ENCODE measurements at regions of chr20 and their contacts with region 1.

Region 1: DNA sequence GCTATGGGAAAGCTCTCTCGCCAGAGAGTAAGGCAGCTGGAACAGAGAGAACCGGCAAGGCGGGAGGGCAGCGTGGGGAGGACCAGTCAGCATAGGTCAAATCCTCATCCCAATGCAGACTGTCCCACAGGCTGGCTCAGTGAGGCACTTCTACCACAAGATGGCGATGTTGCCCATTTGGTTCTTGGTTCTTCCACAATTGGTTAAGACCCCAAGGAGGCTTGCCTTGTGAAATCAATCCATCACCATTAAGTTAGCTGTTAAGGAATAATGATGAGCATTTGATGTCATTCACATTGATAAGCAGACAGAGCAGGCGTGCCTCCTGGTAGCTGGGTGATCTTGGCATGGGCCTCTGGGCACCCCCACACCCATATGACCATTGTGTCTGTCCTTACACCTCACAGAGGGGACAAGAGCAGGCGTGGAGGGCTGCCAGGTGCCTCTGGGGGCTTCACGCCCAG is 2.4 kb downstream of the CSTL1 start:
- DNase-seq: peak; percentile 77
- H3K4me3 ChIP-seq: no peak overlapping the region
- H3K27ac ChIP-seq: no peak overlapping the region
- H3K4me1 ChIP-seq: no peaks in the 10 kb centered on the region
- H3K27me3 ChIP-seq: no peaks in the 10 kb centered on the region
- CTCF ChIP-seq: peak; percentile 80 to 90
- POLR2A ChIP-seq: no peak

Region 2: DNA sequence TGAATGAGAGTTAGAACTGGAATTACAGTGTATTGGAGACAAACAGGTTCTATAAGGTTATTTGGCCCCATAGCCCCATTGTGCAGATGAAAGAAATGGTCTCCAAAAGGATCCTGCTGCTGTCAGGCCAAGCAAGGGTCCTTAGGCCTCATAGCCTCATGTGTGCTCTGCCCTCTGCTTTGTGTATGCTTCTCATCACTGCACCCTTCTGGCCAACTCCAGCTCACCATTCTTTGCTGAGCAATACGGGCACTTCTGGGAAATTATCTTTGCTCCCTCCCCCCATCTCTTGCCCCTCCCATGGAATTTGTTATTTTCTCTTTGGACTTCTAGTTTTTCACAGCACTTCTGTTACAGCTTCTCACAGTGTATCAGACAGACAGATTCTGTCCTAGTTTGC is 1156.3 kb before region 1 on chr20:
- CTCF ChIA-PET with region 1: no interaction called
- POLR2A ChIA-PET with region 1: no interaction called
- dilution Hi-C with region 1: no loop called
- intact Hi-C with region 1: no loop called
- DNase-seq: no peak
- H3K4me3 ChIP-seq: no peak overlapping the region
- H3K27ac ChIP-seq: no peak overlapping the region
- H3K4me1 ChIP-seq: no peaks in the 10 kb centered on the region
- H3K27me3 ChIP-seq: no peaks in the 10 kb centered on the region
- CTCF ChIP-seq: no peak
- POLR2A ChIP-seq: no peak

Region 3: GRCh38 chr20:23365390-23366165 is 76.3 kb before region 1 on chr20:
- CTCF ChIA-PET with region 1: no interaction called
- POLR2A ChIA-PET with region 1: no interaction called
- dilution Hi-C with region 1: no loop called
- intact Hi-C with region 1: no loop called
- DNase-seq: no peak
- H3K4me3 ChIP-seq: no peak overlapping the region
- H3K27ac ChIP-seq: no peak overlapping the region
- H3K4me1 ChIP-seq: peaks cover 39% of the 10 kb centered on the region
- H3K27me3 ChIP-seq: no peaks in the 10 kb centered on the region
- CTCF ChIP-seq: no peak
- POLR2A ChIP-seq: no peak

Region 4: GRCh38 chr20:23451956-23452487 is 10.1 kb after region 1 on chr20:
- CTCF ChIA-PET with region 1: interaction called, 10 read pairs
- POLR2A ChIA-PET with region 1: no interaction called
- dilution Hi-C with region 1: no loop called
- intact Hi-C with region 1: no loop called
- DNase-seq: no peak
- H3K4me3 ChIP-seq: no peak overlapping the region
- H3K27ac ChIP-seq: no peak overlapping the region
- H3K4me1 ChIP-seq: no peaks in the 10 kb centered on the region
- H3K27me3 ChIP-seq: no peaks in the 10 kb centered on the region
- CTCF ChIP-seq: no peak
- POLR2A ChIP-seq: no peak

Region 5: DNA sequence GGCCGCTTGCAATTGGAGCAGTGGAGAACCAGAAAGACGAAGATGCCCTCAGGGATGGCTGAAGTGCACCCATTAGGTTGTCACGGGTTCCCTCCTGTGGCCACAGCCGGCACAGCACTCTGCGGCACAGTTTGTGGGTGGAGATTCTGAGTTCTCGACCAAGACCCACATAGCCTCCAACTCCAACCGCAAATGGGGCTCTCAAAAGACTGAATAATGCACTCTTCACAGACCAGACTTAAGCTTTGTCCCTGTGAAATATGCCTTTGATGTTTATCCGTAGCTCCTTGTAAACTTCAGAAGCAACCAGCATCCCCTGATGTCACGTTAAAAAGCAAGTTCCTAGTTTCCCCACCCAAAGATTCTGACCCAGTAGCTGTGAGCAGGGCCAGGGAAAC is 164.8 kb after region 1 on chr20:
- CTCF ChIA-PET with region 1: interaction called, 12 read pairs
- POLR2A ChIA-PET with region 1: no interaction called
- dilution Hi-C with region 1: no loop called
- intact Hi-C with region 1: loop called (anchors 1 kb)
- DNase-seq: peak; percentile 67
- H3K4me3 ChIP-seq: no peak overlapping the region
- H3K27ac ChIP-seq: no peak overlapping the region
- H3K4me1 ChIP-seq: no peaks in the 10 kb centered on the region
- H3K27me3 ChIP-seq: peaks cover 8% of the 10 kb centered on the region in 2 experiments
- CTCF ChIP-seq: peak; percentile 86 to 90
- POLR2A ChIP-seq: no peak

Measured in endothelial cell of umbilical vein (primary cell).